ENCODE measurements at regions of chr1 and their contacts with region 1.

Region 1: GRCh38 chr1:229430761-229431283 is 3.1 kb downstream of the ACTA1 start:
- DNase-seq: peak; percentile 61 to 83 (median 80)
- ATAC-seq: peak; percentile 18 to 49 (median 32)
- H3K4me3 ChIP-seq: peak overlapping the region in 9 of 12 donors; percentile 13 to 72 (median 54)
- H3K27ac ChIP-seq: peak overlapping the region in 8 of 12 donors; percentile 5 to 98 (median 92)
- H3K4me1 ChIP-seq: peaks cover 0 to 50% (median 17%) of the 10 kb centered on the region in 12 donors
- H3K27me3 ChIP-seq: peaks cover 19 to 85% (median 51%) of the 10 kb centered on the region in 9 donors
- CTCF ChIP-seq: peak in 1 of 12 donors; percentile 26
- POLR2A ChIP-seq: no peak

Region 2: GRCh38 chr1:229410692-229411443 is 20.0 kb before region 1 on chr1:
- intact Hi-C with region 1: loop called in 3 of 10 experiments (anchors 1 to 2 kb)
- DNase-seq: peak; percentile 80 to 90 (median 83)
- ATAC-seq: peak; percentile 66 to 84 (median 80)
- H3K4me3 ChIP-seq: peak overlapping the region in 7 of 12 donors; percentile 5 to 42 (median 30)
- H3K27ac ChIP-seq: peak overlapping the region; percentile 50 to 98 (median 92)
- H3K4me1 ChIP-seq: peaks cover 3 to 51% (median 37%) of the 10 kb centered on the region in 12 donors
- H3K27me3 ChIP-seq: peaks cover 0 to 43% (median 24%) of the 10 kb centered on the region in 9 donors
- CTCF ChIP-seq: no peak
- POLR2A ChIP-seq: no peak

Measured in heart left ventricle (tissue), 16 donors.